ENCODE measurements at regions of chr10 and their contacts with region 1.

Region 1: GRCh38 chr10:63720072-63720537 is 198.9 kb downstream of the REEP3 start:
- DNase-seq: peak; percentile 57
- ATAC-seq: peak; percentile 49
- H3K4me3 Mint-ChIP-seq: no peak overlapping the region
- H3K27ac Mint-ChIP-seq: no peak overlapping the region
- H3K4me1 Mint-ChIP-seq: peaks cover 7% of the 10 kb centered on the region
- H3K27me3 Mint-ChIP-seq: peaks cover 10% of the 10 kb centered on the region

Region 2: GRCh38 chr10:63157845-63158624 is 562.1 kb before region 1 on chr10:
- CTCF ChIA-PET with region 1: interaction called, 33 read pairs
- POLR2A ChIA-PET with region 1: no interaction called
- intact Hi-C with region 1: no loop called
- DNase-seq: peak; percentile 61
- ATAC-seq: peak; percentile 61
- H3K4me3 Mint-ChIP-seq: no peak overlapping the region
- H3K27ac Mint-ChIP-seq: no peak overlapping the region
- H3K4me1 Mint-ChIP-seq: peaks cover 6% of the 10 kb centered on the region
- H3K27me3 Mint-ChIP-seq: no peaks in the 10 kb centered on the region

Region 3: DNA sequence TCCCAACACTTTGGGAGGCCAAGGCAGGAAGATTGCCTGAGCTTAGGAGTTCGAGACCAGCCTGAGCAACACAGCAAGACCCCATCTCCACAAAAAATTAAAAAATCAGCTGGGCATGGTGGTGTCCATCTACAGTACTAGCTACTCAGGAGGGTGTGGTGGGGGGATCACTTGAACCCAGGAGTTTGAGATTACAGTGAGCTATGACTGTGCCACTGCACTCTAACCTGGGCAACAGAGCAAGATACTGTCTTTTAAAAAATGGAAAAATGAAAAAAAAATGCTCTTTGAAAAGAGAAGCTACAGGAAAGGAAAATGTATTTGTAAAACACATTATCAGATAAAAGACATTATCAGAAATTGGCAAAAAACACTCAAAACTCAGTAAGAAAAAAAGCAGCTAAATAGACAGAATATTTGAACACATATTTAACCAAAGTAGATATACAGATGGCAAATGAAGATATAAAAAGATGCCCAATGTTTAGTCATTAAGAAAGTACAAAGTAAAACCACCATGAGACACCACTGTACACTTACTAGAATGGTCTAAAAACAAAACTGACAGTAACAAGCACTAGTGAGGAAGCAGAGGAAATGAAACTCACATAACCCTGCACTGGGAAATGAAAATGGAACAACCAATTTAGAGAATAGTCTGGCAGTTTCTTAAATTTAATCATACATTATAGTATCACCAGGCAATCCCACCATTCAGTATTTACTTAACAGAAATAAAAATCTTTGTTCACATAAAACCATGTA is 546.5 kb before region 1 on chr10:
- CTCF ChIA-PET with region 1: interaction called, 204 read pairs
- POLR2A ChIA-PET with region 1: no interaction called
- intact Hi-C with region 1: no loop called
- DNase-seq: no peak
- ATAC-seq: peak; percentile 96
- H3K4me3 Mint-ChIP-seq: no peak overlapping the region
- H3K27ac Mint-ChIP-seq: peak overlapping the region; percentile 72
- H3K4me1 Mint-ChIP-seq: peaks cover 52% of the 10 kb centered on the region
- H3K27me3 Mint-ChIP-seq: no peaks in the 10 kb centered on the region

Region 4: DNA sequence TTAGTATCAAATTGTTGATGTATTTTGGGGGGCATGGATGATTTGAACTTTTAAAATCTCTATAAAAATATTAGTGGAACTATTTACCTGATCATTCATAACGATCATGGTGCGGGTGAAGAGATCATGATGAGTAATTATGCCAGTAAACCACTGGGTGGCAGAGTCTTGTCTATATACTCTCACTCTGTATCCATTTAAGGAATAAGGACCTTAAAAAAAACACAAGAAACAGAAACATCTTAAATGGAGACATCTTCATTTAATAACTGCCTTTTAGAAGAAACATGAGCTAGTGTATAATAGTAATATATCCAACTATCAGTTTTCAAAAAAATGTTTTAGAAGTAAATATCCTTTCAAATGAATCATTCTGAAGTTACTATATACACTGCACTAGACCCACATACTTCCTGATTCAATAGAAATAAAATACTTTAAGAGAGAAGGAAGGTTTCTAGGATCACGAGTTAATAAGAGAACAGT is 502.9 kb before region 1 on chr10:
- CTCF ChIA-PET with region 1: interaction called, 28 read pairs
- POLR2A ChIA-PET with region 1: no interaction called
- intact Hi-C with region 1: loop called (anchors 1 to 5 kb)
- DNase-seq: no peak
- ATAC-seq: peak; percentile 90
- H3K4me3 Mint-ChIP-seq: no peak overlapping the region
- H3K27ac Mint-ChIP-seq: peak overlapping the region; percentile 19
- H3K4me1 Mint-ChIP-seq: peaks cover 55% of the 10 kb centered on the region
- H3K27me3 Mint-ChIP-seq: no peaks in the 10 kb centered on the region

Region 5: DNA sequence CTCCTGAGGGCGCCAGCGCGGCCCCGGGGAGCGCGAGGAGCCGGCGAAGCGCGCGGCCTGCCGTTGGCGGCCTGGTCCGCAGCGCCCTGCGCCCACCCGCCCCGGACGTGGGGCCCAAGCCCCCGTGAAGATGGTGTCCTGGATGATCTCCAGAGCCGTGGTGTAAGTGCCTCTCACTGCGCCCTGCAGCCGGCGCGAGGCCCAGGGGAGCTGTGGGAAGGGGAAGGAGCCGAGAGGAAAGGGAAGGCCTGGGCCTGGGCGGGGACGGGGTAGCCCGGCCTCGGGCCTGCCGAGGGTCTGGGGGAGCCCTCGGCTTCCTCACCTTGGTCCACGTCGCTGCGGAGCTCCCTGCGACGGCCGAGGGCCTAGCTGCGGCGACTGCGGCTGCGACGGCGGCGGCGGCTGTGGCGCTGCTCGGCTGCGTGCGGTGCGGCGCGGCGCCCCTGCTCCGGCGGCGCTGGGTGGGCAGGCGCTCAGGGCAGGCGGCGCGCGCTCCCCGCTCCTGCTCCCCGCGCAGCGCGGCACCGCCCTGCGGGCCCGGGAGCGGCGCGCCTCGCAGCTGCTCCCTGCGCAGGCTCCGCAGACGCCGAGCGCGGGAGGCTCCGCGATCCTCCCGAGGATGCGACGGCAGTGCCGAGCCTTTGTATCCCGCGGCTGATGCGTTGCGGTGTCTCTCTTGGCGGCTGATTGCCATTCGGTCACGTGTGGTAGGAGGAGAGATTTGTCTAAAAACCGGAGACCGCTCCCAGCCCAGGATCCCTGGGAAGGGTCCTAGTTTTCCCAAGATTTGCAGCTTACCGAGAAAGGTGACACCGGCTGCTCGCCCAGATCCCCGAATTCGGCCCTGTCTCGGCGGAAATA is 198.5 kb before region 1 on chr10:
- CTCF ChIA-PET with region 1: interaction called, 12 read pairs
- POLR2A ChIA-PET with region 1: interaction called, 3 read pairs
- intact Hi-C with region 1: loop called in 1 of 2 experiments (anchors 5 kb)
- DNase-seq: peak; percentile 75
- ATAC-seq: peak; percentile 72
- H3K4me3 Mint-ChIP-seq: peak overlapping the region; percentile 86
- H3K27ac Mint-ChIP-seq: peak overlapping the region; percentile 94
- H3K4me1 Mint-ChIP-seq: peaks cover 57% of the 10 kb centered on the region
- H3K27me3 Mint-ChIP-seq: no peaks in the 10 kb centered on the region

Region 6: GRCh38 chr10:63629363-63630084 is 90.6 kb before region 1 on chr10:
- CTCF ChIA-PET with region 1: interaction called, 53 read pairs
- POLR2A ChIA-PET with region 1: no interaction called
- intact Hi-C with region 1: loop called (anchors 1 to 2 kb)
- DNase-seq: peak; percentile 92
- ATAC-seq: peak; percentile 72
- H3K4me3 Mint-ChIP-seq: peak overlapping the region; percentile 80
- H3K27ac Mint-ChIP-seq: peak overlapping the region; percentile 86
- H3K4me1 Mint-ChIP-seq: peaks cover 25% of the 10 kb centered on the region
- H3K27me3 Mint-ChIP-seq: no peaks in the 10 kb centered on the region

Region 7: DNA sequence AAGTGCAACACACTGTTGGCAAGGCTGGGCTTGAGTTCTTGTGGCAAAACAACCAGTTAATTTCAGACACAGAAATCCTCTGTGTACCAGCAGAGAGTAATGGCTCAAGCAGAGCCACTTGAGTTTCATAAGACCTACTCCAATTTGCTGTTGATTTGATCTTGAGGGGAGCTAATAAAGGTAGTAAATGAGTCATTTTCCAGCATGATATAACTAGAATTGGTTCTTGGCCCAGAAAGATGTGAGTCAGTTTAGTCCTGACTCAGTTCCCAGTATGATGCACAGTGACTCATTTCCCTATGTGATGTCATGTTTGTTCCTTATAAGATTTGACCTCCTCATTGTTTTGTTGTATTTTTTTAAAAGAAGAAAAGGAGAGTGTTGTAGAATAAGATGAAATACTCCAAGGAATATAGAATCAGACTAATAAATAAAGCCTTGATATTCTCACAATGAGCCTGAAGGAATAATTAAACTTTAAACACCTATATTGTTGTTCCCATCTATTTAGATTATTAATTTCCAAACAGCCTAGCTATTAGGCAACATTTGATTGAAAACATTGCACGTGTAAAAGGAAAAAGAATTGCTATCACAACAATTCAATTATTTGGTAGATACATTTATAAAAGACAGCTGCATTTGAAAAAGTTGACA is 12.7 kb before region 1 on chr10:
- CTCF ChIA-PET with region 1: interaction called, 67 read pairs
- POLR2A ChIA-PET with region 1: no interaction called
- intact Hi-C with region 1: no loop called
- DNase-seq: peak; percentile 39
- ATAC-seq: peak; percentile 94
- H3K4me3 Mint-ChIP-seq: no peak overlapping the region
- H3K27ac Mint-ChIP-seq: no peak overlapping the region
- H3K4me1 Mint-ChIP-seq: peaks cover 19% of the 10 kb centered on the region
- H3K27me3 Mint-ChIP-seq: no peaks in the 10 kb centered on the region

Region 8: DNA sequence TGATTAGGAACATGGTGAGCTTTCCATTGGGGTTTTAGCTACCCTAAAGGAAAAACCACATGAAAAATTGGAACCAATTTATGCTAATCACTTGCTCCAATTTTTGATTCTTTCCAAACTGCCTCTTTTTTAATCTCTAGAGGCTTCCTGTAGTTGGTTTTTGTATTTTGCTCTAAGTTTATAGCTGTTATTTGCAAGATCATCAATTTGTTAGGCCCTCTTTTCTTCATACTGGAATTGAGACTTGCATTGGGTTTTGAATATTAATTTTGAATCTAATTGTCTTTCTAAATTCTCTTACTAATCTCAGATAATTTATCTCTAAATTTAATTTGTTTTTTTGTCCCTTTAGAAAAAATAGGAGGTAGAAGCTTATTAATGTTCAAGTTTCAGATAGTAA is 514.4 kb after region 1 on chr10:
- CTCF ChIA-PET with region 1: no interaction called
- POLR2A ChIA-PET with region 1: no interaction called
- intact Hi-C with region 1: no loop called
- DNase-seq: no peak
- ATAC-seq: no peak
- H3K4me3 Mint-ChIP-seq: no peak overlapping the region
- H3K27ac Mint-ChIP-seq: no peak overlapping the region
- H3K4me1 Mint-ChIP-seq: no peaks in the 10 kb centered on the region
- H3K27me3 Mint-ChIP-seq: no peaks in the 10 kb centered on the region

Measured in activated CD4-positive, alpha-beta T cell treated with anti-CD3 and anti-CD28 coated beads for 36 hours (primary cell).